H1 (cell line): ENCODE measurements at regions of chr2 and their contacts with region 1.

Region 1: GRCh38 chr2:101001691-101002561 is at the start of gene RPL31:
- DNase-seq: peak; percentile 91 to 96
- H3K4me3 ChIP-seq: peak within 1 kb of the TSS; percentile 88 to 99 (median 94)
- H3K27ac ChIP-seq: peak within 1 kb of the TSS; percentile 91
- H3K4me1 ChIP-seq: peaks cover 5 to 10% (median 8%) of the 10 kb centered on the region in 4 experiments; a peak in 6 of 7 replicates
- H3K27me3 ChIP-seq: peaks cover 0 to 7% (median 2%) of the 10 kb centered on the region in 4 experiments; a peak in 3 of 7 replicates
- CTCF ChIP-seq: no peak; a peak in 1 of 4 replicates
- EP300 ChIP-seq: no peak
- POLR2A ChIP-seq: peak; percentile 86 to 99
- RAD21 ChIP-seq: no peak
- total RNA-seq, gene RPL31: 1,722 and 1,734 TPM in 2 replicates

Region 2: DNA sequence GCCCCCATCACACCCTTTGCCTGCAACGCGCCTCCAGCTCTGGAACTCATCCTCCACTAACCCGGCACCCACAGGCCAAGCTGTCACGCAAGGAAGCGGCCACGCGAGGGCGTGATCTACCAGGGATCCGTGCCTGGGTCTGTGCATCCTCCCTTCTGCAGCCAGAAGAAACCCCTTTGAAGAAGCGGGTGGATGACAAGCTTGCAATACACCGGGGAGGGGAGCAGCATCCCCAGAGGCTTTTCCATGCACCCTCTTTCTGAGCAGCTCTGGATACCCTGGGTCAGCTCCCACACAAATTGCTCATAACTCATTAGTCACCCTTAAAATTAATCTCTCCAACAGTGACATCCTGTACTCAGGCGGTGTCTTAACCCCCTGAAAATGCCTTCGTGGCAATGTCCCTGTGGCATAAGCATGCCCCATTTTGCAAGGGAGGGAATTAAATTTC is 391.5 kb before region 1 on chr2:
- CTCF ChIA-PET with region 1: interaction called, 4 read pairs
- POLR2A ChIA-PET with region 1: interaction called, 14 read pairs
- DNase-seq: peak; percentile 36 to 85
- H3K4me3 ChIP-seq: no peak overlapping the region
- H3K27ac ChIP-seq: no peak overlapping the region
- H3K4me1 ChIP-seq: peaks cover 0 to 4% (median 2%) of the 10 kb centered on the region in 4 experiments; a peak in 2 of 7 replicates
- H3K27me3 ChIP-seq: no peaks in the 10 kb centered on the region
- CTCF ChIP-seq: peak; percentile 85 to 91 (median 89)
- EP300 ChIP-seq: no peak
- POLR2A ChIP-seq: no peak
- RAD21 ChIP-seq: peak; percentile 97 to 98

Region 3: DNA sequence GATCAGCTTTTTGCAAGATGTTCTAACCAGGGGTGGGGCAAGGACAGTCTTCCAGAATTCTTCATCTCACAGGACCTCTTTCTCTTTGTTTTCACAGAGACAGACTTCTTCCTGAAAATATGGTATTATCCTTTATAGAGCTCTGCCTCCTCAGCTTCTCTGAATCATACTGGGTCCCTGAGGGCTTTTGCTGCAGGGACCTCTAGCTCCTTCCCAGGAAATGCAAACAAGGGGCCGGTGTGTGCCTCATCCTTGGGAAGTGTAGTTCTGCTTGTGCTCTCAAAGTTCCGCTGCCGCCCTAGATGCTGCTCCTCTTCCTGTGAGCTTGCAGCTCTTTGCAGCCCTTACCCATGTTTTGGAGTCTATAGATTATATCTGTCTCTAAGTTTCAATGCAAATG is 281.5 kb before region 1 on chr2:
- CTCF ChIA-PET with region 1: no interaction called
- POLR2A ChIA-PET with region 1: no interaction called
- DNase-seq: no peak
- H3K4me3 ChIP-seq: no peak overlapping the region
- H3K27ac ChIP-seq: no peak overlapping the region
- H3K4me1 ChIP-seq: no peaks in the 10 kb centered on the region
- H3K27me3 ChIP-seq: no peaks in the 10 kb centered on the region
- CTCF ChIP-seq: no peak
- EP300 ChIP-seq: no peak
- POLR2A ChIP-seq: no peak
- RAD21 ChIP-seq: no peak

Region 4: DNA sequence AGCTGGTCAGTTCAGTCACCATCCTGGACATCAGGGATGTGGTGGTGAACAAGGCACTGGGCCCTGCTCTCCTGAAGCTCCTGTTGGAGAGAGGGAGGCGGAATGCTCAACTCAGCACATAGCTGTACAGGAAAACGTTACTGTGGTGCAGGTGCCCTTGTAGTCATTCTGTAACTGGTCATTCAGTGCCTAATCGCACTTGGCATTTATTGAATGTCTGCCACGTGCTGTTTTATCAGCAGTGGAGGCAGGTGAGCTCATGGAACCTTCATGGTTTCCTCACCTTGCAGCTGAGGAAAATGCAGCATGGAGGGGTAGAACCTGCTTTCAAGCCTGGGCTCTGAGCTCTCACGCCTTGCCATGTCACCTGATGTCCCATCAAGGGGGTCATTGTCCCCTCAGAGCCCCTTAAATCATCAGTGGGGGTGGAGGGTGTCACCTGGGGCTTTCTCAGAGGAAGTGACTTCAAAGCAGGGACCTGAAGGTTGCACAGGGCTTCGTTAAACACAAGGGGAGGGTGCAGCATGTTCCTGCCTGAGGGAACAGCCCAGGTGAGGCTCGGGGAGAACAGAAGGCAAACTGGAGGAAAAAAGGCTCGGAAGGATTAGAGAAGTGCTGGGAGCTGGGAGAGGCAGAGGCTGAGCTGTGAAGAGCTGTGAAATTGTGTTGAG is 55.9 kb before region 1 on chr2:
- CTCF ChIA-PET with region 1: no interaction called
- POLR2A ChIA-PET with region 1: no interaction called
- DNase-seq: no peak
- H3K4me3 ChIP-seq: no peak overlapping the region
- H3K27ac ChIP-seq: no peak overlapping the region
- H3K4me1 ChIP-seq: peaks cover 0 to 9% (median 4%) of the 10 kb centered on the region in 4 experiments; a peak in 5 of 7 replicates
- H3K27me3 ChIP-seq: no peaks in the 10 kb centered on the region
- CTCF ChIP-seq: no peak
- EP300 ChIP-seq: no peak
- POLR2A ChIP-seq: no peak
- RAD21 ChIP-seq: no peak

Region 5: GRCh38 chr2:100988630-100989417 is 13.1 kb before region 1 on chr2:
- CTCF ChIA-PET with region 1: no interaction called
- POLR2A ChIA-PET with region 1: interaction called, 63 read pairs
- DNase-seq: no peak
- H3K4me3 ChIP-seq: no peak overlapping the region
- H3K27ac ChIP-seq: no peak overlapping the region
- H3K4me1 ChIP-seq: peaks cover 0 to 2% (median under 1%) of the 10 kb centered on the region in 4 experiments; a peak in 2 of 7 replicates
- H3K27me3 ChIP-seq: no peaks in the 10 kb centered on the region
- CTCF ChIP-seq: no peak
- EP300 ChIP-seq: no peak
- POLR2A ChIP-seq: no peak
- RAD21 ChIP-seq: no peak

Region 6: GRCh38 chr2:101030863-101031554 is 29.1 kb after region 1 on chr2:
- CTCF ChIA-PET with region 1: interaction called, 5 read pairs
- POLR2A ChIA-PET with region 1: interaction called, 29 read pairs
- DNase-seq: no peak
- H3K4me3 ChIP-seq: no peak overlapping the region
- H3K27ac ChIP-seq: no peak overlapping the region
- H3K4me1 ChIP-seq: peaks cover 2 to 9% (median 4%) of the 10 kb centered on the region in 4 experiments; a peak in 5 of 7 replicates
- H3K27me3 ChIP-seq: no peaks in the 10 kb centered on the region
- CTCF ChIP-seq: no peak
- EP300 ChIP-seq: no peak
- POLR2A ChIP-seq: no peak
- RAD21 ChIP-seq: no peak

Region 7: GRCh38 chr2:101151141-101151858 is 149.4 kb after region 1 on chr2 and contains the start of gene TBC1D8:
- CTCF ChIA-PET with region 1: interaction called, 9 read pairs
- POLR2A ChIA-PET with region 1: interaction called, 151 read pairs
- DNase-seq: peak in 1 of 2 experiments; percentile 89
- H3K4me3 ChIP-seq: peak within 1 kb of the TSS; percentile 62 to 81 (median 72)
- H3K27ac ChIP-seq: no peak within 1 kb of the TSS
- H3K4me1 ChIP-seq: peaks cover 6 to 12% (median 9%) of the 10 kb centered on the region in 4 experiments
- H3K27me3 ChIP-seq: peaks cover 0 to 8% (median 2%) of the 10 kb centered on the region in 4 experiments; a peak in 4 of 7 replicates
- CTCF ChIP-seq: no peak
- EP300 ChIP-seq: no peak
- POLR2A ChIP-seq: peak in 1 of 2 experiments; percentile 42; a peak in 1 of 3 replicates
- RAD21 ChIP-seq: no peak
- total RNA-seq, gene TBC1D8: 21.8 and 24.0 TPM in 2 replicates